Transverse colon (tissue), 4 donors: ENCODE measurements at regions of chr3 and their contacts with region 1.

Region 1: GRCh38 chr3:112519424-112520001 is 20.2 kb upstream of the BTLA start:
- DNase-seq: peak; percentile 14
- H3K4me3 ChIP-seq: no peak overlapping the region
- H3K27ac ChIP-seq: no peak overlapping the region
- H3K4me1 ChIP-seq: no peaks in the 10 kb centered on the region
- H3K27me3 ChIP-seq: no peaks in the 10 kb centered on the region
- CTCF ChIP-seq: peak; percentile 66 to 83 (median 70)
- EP300 ChIP-seq: no peak
- POLR2A ChIP-seq: no peak

Region 2: GRCh38 chr3:112111785-112112402 is 407.6 kb before region 1 on chr3:
- in situ Hi-C with region 1: loop called in 2 of 4 experiments (anchors 25 kb)
- intact Hi-C with region 1: no loop called
- DNase-seq: peak; percentile 60
- H3K4me3 ChIP-seq: no peak overlapping the region
- H3K27ac ChIP-seq: no peak overlapping the region
- H3K4me1 ChIP-seq: peaks cover 0 to 8% (median 1%) of the 10 kb centered on the region in 4 donors
- H3K27me3 ChIP-seq: no peaks in the 10 kb centered on the region
- CTCF ChIP-seq: peak; percentile 54 to 65 (median 64)
- EP300 ChIP-seq: no peak
- POLR2A ChIP-seq: no peak

Region 3: GRCh38 chr3:112136959-112137693 is 382.4 kb before region 1 on chr3:
- in situ Hi-C with region 1: loop called in 2 of 4 experiments (anchors 25 kb)
- intact Hi-C with region 1: no loop called
- DNase-seq: peak; percentile 37
- H3K4me3 ChIP-seq: no peak overlapping the region
- H3K27ac ChIP-seq: no peak overlapping the region
- H3K4me1 ChIP-seq: peaks cover 0 to 5% (median 0%) of the 10 kb centered on the region in 4 donors
- H3K27me3 ChIP-seq: no peaks in the 10 kb centered on the region
- CTCF ChIP-seq: peak; percentile 16 to 47 (median 40)
- EP300 ChIP-seq: no peak
- POLR2A ChIP-seq: no peak

Region 4: GRCh38 chr3:112293368-112294321 is 225.9 kb before region 1 on chr3 and contains the start of gene SLC9C1:
- in situ Hi-C with region 1: loop called in 1 of 4 experiments (anchors 10 kb)
- intact Hi-C with region 1: loop called (anchors 5 kb)
- DNase-seq: peak; percentile 40
- H3K4me3 ChIP-seq: peak within 1 kb of the TSS; percentile 11 to 56 (median 32)
- H3K27ac ChIP-seq: peak within 1 kb of the TSS; percentile 79 to 83 (median 80)
- H3K4me1 ChIP-seq: peaks cover 0 to 4% (median 0%) of the 10 kb centered on the region in 4 donors
- H3K27me3 ChIP-seq: no peaks in the 10 kb centered on the region
- CTCF ChIP-seq: peak; percentile 48 to 65 (median 55)
- EP300 ChIP-seq: no peak
- POLR2A ChIP-seq: no peak
- total RNA-seq, gene SLC9C1: not detected

Region 5: GRCh38 chr3:112321867-112322649 is 197.5 kb before region 1 on chr3:
- in situ Hi-C with region 1: loop called in 3 of 4 experiments (anchors 5 to 10 kb)
- intact Hi-C with region 1: no loop called
- DNase-seq: no peak
- H3K4me3 ChIP-seq: no peak overlapping the region
- H3K27ac ChIP-seq: peak overlapping the region in 2 of 4 donors; percentile 27 to 29
- H3K4me1 ChIP-seq: peaks cover 0 to 8% (median 0%) of the 10 kb centered on the region in 4 donors
- H3K27me3 ChIP-seq: no peaks in the 10 kb centered on the region
- CTCF ChIP-seq: no peak
- EP300 ChIP-seq: no peak
- POLR2A ChIP-seq: no peak

Region 6: DNA sequence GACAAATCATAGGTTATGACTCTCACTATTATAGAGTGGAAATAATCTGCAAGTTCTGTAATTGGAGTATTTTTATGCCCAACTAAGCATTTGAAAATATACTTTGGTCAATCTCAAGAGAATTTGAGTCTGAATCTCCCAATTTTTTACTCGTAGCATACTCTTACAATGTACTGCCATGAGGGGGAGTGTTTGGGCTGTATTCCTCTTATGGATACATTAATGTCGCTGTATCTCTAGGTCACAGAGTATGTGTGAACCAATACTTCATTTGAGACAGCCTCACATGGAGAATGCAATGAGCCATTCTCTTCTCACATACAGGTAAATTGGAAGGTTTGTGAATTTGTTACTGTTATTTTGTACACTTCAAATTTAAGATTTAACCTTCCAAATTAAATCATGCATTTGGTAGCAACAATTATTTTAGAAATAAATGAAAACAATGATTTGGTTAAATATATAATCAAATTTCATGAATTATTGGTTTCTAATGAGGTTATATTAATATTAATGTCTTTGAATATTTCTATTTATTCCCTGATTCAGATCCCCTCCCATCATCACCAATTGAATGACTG is 192.1 kb before region 1 on chr3:
- in situ Hi-C with region 1: loop called in 3 of 4 experiments (anchors 5 to 10 kb)
- intact Hi-C with region 1: no loop called
- DNase-seq: no peak
- H3K4me3 ChIP-seq: no peak overlapping the region
- H3K27ac ChIP-seq: no peak overlapping the region
- H3K4me1 ChIP-seq: peaks cover 0 to 4% (median under 1%) of the 10 kb centered on the region in 4 donors
- H3K27me3 ChIP-seq: no peaks in the 10 kb centered on the region
- CTCF ChIP-seq: peak; percentile 57 to 72 (median 60)
- EP300 ChIP-seq: no peak
- POLR2A ChIP-seq: no peak

Region 7: DNA sequence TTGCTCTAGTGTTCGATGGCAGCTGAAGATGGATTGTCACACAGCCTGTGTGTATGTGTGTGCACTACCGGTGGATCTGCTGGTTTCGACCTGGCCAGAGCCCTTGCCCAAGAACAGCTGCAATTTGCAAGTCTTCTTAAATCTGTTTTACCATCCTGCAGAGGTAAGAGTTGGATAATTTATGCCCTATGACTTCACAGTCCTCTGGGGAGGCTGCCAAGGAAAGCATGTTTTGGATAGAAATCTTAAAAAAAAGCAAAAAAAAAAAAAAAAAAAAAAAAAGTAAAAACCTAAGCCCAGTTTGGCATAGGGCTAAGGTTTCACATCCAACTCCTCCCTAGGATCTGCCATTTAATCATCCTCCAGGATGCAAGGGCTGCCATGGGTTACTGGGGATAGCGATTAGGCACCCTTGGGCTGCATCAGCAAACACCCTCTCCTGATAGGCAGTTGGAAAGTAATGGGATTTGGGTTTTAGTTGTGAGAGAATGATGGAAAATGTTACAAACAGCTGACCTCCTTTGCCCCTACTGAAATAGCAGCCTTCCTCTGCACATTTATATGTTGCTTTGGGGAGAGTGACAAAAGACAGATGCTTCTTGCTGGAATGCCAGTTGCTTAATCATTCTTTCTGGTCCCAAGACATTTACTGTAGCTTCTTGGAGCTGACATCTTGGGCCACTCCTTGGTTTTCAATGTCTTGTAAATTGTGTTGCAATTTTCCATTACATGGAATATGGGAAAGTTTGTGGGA is 291.8 kb after region 1 on chr3:
- in situ Hi-C with region 1: no loop called
- intact Hi-C with region 1: no loop called
- DNase-seq: no peak
- H3K4me3 ChIP-seq: no peak overlapping the region
- H3K27ac ChIP-seq: peak overlapping the region; percentile 64 to 83 (median 68)
- H3K4me1 ChIP-seq: peaks cover 3 to 30% (median 10%) of the 10 kb centered on the region in 4 donors
- H3K27me3 ChIP-seq: no peaks in the 10 kb centered on the region
- CTCF ChIP-seq: no peak
- EP300 ChIP-seq: peak; percentile 91
- POLR2A ChIP-seq: no peak